ENCODE measurements at regions of chr12 and their contacts with region 1.

Region 1: GRCh38 chr12:43776498-43776897 is 17.7 kb downstream of the IRAK4 start:
- DNase-seq: no peak
- ATAC-seq: no peak

Region 2: DNA sequence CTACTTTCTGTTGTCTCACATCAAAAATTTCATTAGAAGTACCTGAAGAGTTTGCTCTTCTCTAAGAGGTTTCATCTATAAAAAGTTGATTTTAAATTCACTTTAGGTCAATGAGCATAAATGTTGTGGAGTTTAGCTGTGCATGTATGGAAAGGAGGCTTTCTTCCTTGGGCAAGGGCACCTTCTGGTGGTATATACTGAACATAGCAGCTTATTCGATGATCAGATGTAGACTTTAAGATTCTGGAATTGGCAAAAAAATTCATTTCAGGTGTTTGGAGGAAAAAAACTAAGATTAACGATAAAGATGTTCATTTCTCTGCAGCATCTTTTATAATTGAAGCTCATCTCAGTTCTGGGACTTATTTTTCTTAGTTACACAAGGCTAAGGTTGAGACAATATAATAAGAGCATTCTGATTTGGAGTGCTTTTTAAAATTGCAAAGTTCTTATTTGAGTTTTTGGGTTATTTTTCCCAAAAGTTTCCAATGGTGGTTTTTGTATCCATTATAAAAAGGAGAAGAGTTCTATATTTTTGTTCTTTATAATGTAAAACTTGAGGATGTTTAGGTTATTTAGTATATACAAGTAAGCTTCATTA is 106.2 kb after region 1 on chr12:
- intact Hi-C with region 1: loop called in 1 of 2 experiments (anchors 5 kb)
- DNase-seq: no peak
- ATAC-seq: peak; percentile 66 to 79